ENCODE measurements at regions of chr6 and their contacts with region 1.

Region 1: DNA sequence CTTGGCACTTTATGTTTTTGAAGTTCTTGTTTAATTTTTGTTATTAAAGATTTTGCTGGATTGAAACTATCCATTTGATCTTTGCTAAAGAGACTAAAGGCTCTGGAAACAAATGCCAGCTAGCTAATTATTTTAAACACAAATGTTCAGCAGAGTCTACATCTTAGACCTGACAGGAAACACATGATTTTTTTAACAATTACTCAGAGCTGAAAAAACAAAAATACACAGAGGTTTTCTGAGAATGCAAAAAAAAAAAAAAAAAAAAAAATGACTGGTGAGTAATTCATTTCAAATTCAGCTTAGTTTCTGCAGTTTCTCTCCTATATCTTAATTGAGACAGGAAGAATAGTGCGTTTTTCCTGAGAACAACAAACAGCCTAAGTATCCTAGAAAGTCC is 448.0 kb downstream of the TENT5A start:
- DNase-seq: no peak
- ATAC-seq: no peak
- H3K4me3 ChIP-seq: no peak overlapping the region
- H3K4me3 Mint-ChIP-seq: no peak overlapping the region
- H3K27ac ChIP-seq: no peak overlapping the region
- H3K27ac Mint-ChIP-seq: no peak overlapping the region
- H3K4me1 ChIP-seq: no peaks in the 10 kb centered on the region
- H3K4me1 Mint-ChIP-seq: no peaks in the 10 kb centered on the region
- H3K27me3 ChIP-seq: no peaks in the 10 kb centered on the region
- H3K27me3 Mint-ChIP-seq: no peaks in the 10 kb centered on the region
- CTCF ChIP-seq: no peak

Region 2: GRCh38 chr6:81093051-81093450 is 211.4 kb before region 1 on chr6:
- CTCF ChIA-PET with region 1: no interaction called
- POLR2A ChIA-PET with region 1: no interaction called
- intact Hi-C with region 1: loop called (anchors 10 kb)
- DNase-seq: no peak
- ATAC-seq: no peak
- H3K4me3 ChIP-seq: no peak overlapping the region
- H3K4me3 Mint-ChIP-seq: no peak overlapping the region
- H3K27ac ChIP-seq: no peak overlapping the region
- H3K27ac Mint-ChIP-seq: no peak overlapping the region
- H3K4me1 ChIP-seq: no peaks in the 10 kb centered on the region
- H3K4me1 Mint-ChIP-seq: no peaks in the 10 kb centered on the region
- H3K27me3 ChIP-seq: no peaks in the 10 kb centered on the region
- H3K27me3 Mint-ChIP-seq: no peaks in the 10 kb centered on the region
- CTCF ChIP-seq: no peak

Region 3: GRCh38 chr6:81214414-81215091 is 89.9 kb before region 1 on chr6:
- CTCF ChIA-PET with region 1: no interaction called
- POLR2A ChIA-PET with region 1: no interaction called
- intact Hi-C with region 1: no loop called
- DNase-seq: no peak
- ATAC-seq: no peak
- H3K4me3 ChIP-seq: no peak overlapping the region
- H3K4me3 Mint-ChIP-seq: no peak overlapping the region
- H3K27ac ChIP-seq: no peak overlapping the region
- H3K27ac Mint-ChIP-seq: no peak overlapping the region
- H3K4me1 ChIP-seq: no peaks in the 10 kb centered on the region
- H3K4me1 Mint-ChIP-seq: no peaks in the 10 kb centered on the region
- H3K27me3 ChIP-seq: no peaks in the 10 kb centered on the region
- H3K27me3 Mint-ChIP-seq: no peaks in the 10 kb centered on the region
- CTCF ChIP-seq: no peak

Measured in B cell (primary cell).